ENCODE measurements at regions of chr4 and their contacts with region 1.

Region 1: GRCh38 chr4:118888666-118889311 is at the start of gene SYNPO2:
- DNase-seq: peak; percentile 34 to 94
- H3K4me3 ChIP-seq: peak within 1 kb of the TSS; percentile 68 to 77
- H3K27ac ChIP-seq: peak within 1 kb of the TSS; percentile 70 to 89
- H3K4me1 ChIP-seq: peaks cover 0 to 4% of the 10 kb centered on the region in 2 donors
- H3K27me3 ChIP-seq: no peaks in the 10 kb centered on the region
- CTCF ChIP-seq: no peak
- total RNA-seq, gene SYNPO2: 178 TPM

Region 2: GRCh38 chr4:118740869-118741268 is 147.9 kb before region 1 on chr4:
- intact Hi-C with region 1: loop called (anchors 2 kb)
- DNase-seq: no peak
- H3K4me3 ChIP-seq: peak overlapping the region in 1 of 2 donors; percentile 36
- H3K27ac ChIP-seq: peak overlapping the region; percentile 29 to 50
- H3K4me1 ChIP-seq: peaks cover 0 to 9% of the 10 kb centered on the region in 2 donors
- H3K27me3 ChIP-seq: no peaks in the 10 kb centered on the region
- CTCF ChIP-seq: peak; percentile 45 to 54 (median 50)

Region 3: GRCh38 chr4:118772081-118772766 is 116.6 kb before region 1 on chr4:
- intact Hi-C with region 1: loop called (anchors 2 kb)
- DNase-seq: no peak
- H3K4me3 ChIP-seq: peak overlapping the region; percentile 27
- H3K27ac ChIP-seq: peak overlapping the region; percentile 62 to 76
- H3K4me1 ChIP-seq: peaks cover 7 to 46% of the 10 kb centered on the region in 2 donors
- H3K27me3 ChIP-seq: no peaks in the 10 kb centered on the region
- CTCF ChIP-seq: peak; percentile 46 to 62 (median 61)

Region 4: GRCh38 chr4:118835571-118836300 is 53.1 kb before region 1 on chr4 and contains the start of gene SEC24D:
- intact Hi-C with region 1: loop called (anchors 1 kb)
- DNase-seq: peak in 1 of 2 donors; percentile 94
- H3K4me3 ChIP-seq: peak within 1 kb of the TSS; percentile 97 to 98
- H3K27ac ChIP-seq: peak within 1 kb of the TSS; percentile 99
- H3K4me1 ChIP-seq: peaks cover 0 to 27% of the 10 kb centered on the region in 2 donors
- H3K27me3 ChIP-seq: no peaks in the 10 kb centered on the region
- CTCF ChIP-seq: peak in 1 of 3 experiments; percentile 18
- total RNA-seq, gene SEC24D: 108 TPM

Region 5: DNA sequence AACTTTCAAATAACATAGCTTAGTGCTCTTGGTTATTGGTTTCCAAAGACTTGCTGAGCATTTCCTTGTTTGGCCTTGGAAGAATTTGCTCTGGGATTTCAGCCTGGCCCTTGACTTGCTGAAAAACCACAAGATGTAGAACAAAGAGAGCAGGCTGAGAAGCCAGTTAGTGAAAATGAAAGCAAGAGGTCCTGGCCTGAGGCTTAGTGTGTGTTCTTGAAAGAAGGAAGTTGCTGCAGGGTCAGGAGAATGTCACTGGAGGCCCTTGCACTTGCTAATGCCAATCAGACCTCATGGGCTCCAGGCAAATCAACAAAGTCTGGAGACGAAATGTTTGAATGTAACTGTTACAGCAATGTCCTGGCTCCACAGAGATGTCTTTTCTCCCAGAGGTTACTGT is 79.2 kb after region 1 on chr4:
- intact Hi-C with region 1: loop called (anchors 2 kb)
- DNase-seq: peak in 1 of 2 donors; percentile 81
- H3K4me3 ChIP-seq: peak overlapping the region in 1 of 2 donors; percentile 24
- H3K27ac ChIP-seq: peak overlapping the region; percentile 76 to 84
- H3K4me1 ChIP-seq: peaks cover 17 to 61% of the 10 kb centered on the region in 2 donors
- H3K27me3 ChIP-seq: no peaks in the 10 kb centered on the region
- CTCF ChIP-seq: no peak

Measured in ascending aorta (tissue), 2 donors.